Activated CD4-positive, alpha-beta memory T cell treated with anti-CD3 and anti-CD28 coated beads, Interleukin-2, amount 10 ng/mL, durations not matched to agents 7 days and 5 days (primary cell): ENCODE measurements at regions of chr19 and their contacts with region 1.

Region 1: DNA sequence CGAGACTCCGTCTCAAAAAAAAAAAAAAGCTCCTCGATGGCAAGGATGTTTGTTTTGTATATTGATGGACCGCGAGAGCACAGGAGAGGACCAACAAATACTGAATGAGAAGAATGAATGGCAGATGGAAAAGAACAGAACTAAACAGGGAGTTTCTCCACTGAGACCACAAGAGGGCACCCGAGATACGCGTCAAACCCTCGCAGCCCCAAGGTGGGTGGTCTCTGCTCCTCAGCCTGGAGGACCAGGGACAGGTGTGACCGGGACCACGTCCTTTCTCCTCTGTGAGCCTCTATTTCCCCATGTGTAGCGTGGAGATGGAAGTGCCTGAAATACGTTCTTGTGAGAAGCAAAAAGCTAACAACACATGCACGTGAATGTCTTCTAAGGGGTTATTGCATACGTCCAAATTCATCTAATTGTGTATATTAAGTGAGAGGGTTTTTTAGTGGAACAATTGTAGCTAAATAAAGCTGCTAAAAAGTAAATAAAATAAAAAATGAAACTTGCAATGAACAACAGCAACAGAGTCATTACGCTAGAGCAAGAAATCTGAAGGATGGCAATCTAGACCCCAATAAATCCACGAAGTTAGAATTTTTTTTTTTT is 8.3 kb upstream of the CDC42EP5 start:
- DNase-seq: peak; percentile 40
- H3K4me3 Mint-ChIP-seq: no peak overlapping the region
- H3K27ac Mint-ChIP-seq: no peak overlapping the region
- H3K4me1 Mint-ChIP-seq: peaks cover 38% of the 10 kb centered on the region
- H3K27me3 Mint-ChIP-seq: peaks cover 41% of the 10 kb centered on the region

Region 2: DNA sequence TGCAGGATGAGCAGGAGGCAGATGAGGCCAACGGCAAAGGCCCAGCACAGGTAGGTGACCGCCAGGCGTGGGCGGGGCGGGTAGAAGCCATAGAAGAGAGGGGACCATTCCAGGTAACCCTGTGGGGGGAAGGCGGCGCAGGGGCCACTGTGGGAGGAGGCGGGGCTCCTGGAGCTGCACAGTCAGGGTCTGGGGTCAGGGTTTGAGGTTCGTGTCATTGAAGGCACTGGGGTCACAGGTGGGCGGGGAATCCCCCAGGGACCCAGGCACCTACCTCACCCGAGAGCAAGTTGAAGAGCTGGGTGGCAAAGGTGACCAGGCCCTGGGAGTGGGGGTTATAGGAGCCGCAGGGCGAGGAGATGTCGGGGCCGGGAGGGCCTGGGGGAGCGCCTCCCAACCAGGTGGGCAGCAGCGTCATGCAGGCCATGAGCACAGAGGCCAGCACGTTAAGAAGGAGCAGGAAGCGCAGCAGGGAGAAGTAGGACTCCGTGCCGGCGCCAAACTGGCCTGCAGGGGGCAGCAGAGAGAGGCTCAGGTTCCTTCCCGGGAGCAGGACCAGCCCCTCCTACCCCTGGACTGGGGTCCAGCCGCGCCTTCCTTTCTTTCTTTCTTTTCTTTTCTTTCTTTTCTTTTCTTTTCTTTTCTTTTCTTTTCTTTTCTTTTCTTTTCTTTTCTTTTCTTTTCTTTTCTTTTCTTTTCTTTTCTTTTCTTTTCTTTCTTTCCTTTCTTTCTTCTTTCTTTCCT is 313.1 kb before region 1 on chr19:
- CTCF ChIA-PET with region 1: no interaction called
- POLR2A ChIA-PET with region 1: no interaction called
- DNase-seq: peak; percentile 90
- H3K4me3 Mint-ChIP-seq: no peak overlapping the region
- H3K27ac Mint-ChIP-seq: no peak overlapping the region
- H3K4me1 Mint-ChIP-seq: peaks cover 17% of the 10 kb centered on the region
- H3K27me3 Mint-ChIP-seq: peaks cover 1% of the 10 kb centered on the region

Region 3: DNA sequence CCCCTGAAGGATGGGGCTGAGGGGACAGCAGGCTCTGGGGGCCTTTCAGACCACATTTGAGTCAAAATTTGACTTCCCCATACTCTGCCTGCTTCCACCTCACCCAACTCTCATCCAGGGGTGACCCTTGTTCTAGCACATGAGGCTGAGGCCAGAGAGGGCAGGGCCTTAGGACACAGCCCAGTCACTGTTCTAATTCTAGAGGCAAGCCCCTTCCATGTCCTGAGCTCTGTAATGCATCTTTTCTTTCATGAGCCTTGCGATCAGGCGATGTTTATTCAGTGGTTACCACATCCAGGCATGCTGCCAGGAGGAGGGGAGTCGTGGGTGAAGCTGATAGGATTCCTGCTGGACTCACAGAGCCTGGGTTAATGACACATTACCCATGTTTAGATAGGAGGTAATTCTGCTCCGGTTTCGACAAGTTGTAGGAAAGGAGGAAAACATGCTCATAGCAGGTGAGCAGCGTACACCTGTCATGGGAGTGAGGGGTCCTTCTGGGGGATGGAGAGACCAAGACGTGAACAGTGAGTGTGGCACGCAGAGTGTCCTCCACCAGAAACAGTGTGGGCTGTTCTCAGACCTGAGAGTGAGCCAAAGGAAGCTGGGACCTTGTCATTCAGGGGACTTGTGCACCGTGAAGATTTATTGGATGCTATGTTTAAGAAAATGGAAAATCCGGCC is 271.5 kb before region 1 on chr19:
- CTCF ChIA-PET with region 1: no interaction called
- POLR2A ChIA-PET with region 1: no interaction called
- DNase-seq: no peak
- H3K4me3 Mint-ChIP-seq: no peak overlapping the region
- H3K27ac Mint-ChIP-seq: peak overlapping the region; percentile 74
- H3K4me1 Mint-ChIP-seq: peaks cover 71% of the 10 kb centered on the region
- H3K27me3 Mint-ChIP-seq: no peaks in the 10 kb centered on the region

Region 4: GRCh38 chr19:54653181-54653809 is 171.9 kb after region 1 on chr19:
- CTCF ChIA-PET with region 1: interaction called, 18 read pairs
- POLR2A ChIA-PET with region 1: no interaction called
- DNase-seq: no peak
- H3K4me3 Mint-ChIP-seq: no peak overlapping the region
- H3K27ac Mint-ChIP-seq: no peak overlapping the region
- H3K4me1 Mint-ChIP-seq: no peaks in the 10 kb centered on the region
- H3K27me3 Mint-ChIP-seq: peaks cover 9% of the 10 kb centered on the region